ENCODE measurements at regions of chr11 and their contacts with region 1.

Region 1: GRCh38 chr11:65888163-65888814 is at the start of gene FIBP:
- DNase-seq: peak; percentile 98
- ATAC-seq: peak; percentile 68
- H3K4me3 Mint-ChIP-seq: peak within 1 kb of the TSS; percentile 94
- H3K27ac Mint-ChIP-seq: peak within 1 kb of the TSS; percentile 91
- H3K4me1 Mint-ChIP-seq: peaks cover 51% of the 10 kb centered on the region
- H3K27me3 Mint-ChIP-seq: no peaks in the 10 kb centered on the region
- CTCF ChIP-seq: peak; percentile 75
- total RNA-seq, gene FIBP: 78.8 to 79.9 TPM

Region 2: DNA sequence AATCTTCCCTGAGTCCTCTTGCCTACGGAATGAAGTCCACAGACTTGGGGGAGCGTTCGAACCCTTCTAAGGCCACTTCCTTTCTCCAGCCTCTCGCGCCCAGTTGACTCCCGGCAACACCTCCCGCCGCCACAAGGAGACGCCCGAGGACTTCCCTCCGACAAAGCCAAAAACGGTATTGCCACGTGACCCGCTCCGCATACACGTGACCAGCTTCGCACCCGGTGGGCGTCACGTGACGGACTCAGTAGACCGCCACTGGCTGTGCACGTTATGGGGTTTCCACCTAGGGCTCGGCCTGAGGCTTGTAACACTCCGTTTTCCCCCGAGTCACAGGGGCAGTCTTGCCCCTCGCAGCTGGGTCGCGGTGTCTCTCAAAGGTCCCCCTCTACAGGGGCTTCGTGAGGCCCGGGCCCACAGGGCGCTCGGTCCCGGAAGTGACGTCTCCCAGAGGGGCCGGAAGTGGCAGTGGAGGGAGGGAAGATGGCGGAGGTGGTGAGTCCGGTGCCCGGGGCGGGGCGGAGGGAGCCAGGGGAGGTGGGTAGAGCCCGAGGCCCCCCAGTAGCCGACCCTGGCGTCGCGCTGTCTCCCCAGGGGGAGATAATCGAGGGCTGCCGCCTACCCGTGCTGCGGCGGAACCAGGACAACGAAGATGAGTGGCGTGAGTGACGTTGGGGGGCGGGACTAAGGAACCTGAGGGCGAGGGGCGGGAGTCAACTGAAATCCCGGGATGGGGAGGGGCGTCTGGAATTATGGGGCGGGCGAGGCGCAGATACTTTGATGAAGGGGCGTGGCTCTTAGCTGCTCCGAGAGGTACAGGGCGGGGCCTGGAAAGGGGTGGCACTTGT is 176.3 kb before region 1 on chr11 and contains the start of gene KAT5:
- CTCF ChIA-PET with region 1: interaction called, 30 read pairs
- POLR2A ChIA-PET with region 1: interaction called, 4 read pairs
- intact Hi-C with region 1: no loop called
- DNase-seq: peak; percentile 99
- ATAC-seq: peak; percentile 82
- H3K4me3 Mint-ChIP-seq: peak within 1 kb of the TSS; percentile 93
- H3K27ac Mint-ChIP-seq: peak within 1 kb of the TSS; percentile 98
- H3K4me1 Mint-ChIP-seq: peaks cover 20% of the 10 kb centered on the region
- H3K27me3 Mint-ChIP-seq: no peaks in the 10 kb centered on the region
- CTCF ChIP-seq: peak; percentile 93
- total RNA-seq, gene KAT5: 67.7 to 71.8 TPM

Region 3: GRCh38 chr11:65850831-65851811 is 37.2 kb before region 1 on chr11:
- CTCF ChIA-PET with region 1: interaction called, 283 read pairs
- POLR2A ChIA-PET with region 1: interaction called, 560 read pairs
- intact Hi-C with region 1: no loop called
- DNase-seq: peak; percentile 44
- ATAC-seq: peak; percentile 57
- H3K4me3 Mint-ChIP-seq: no peak overlapping the region
- H3K27ac Mint-ChIP-seq: peak overlapping the region; percentile 33
- H3K4me1 Mint-ChIP-seq: peaks cover 24% of the 10 kb centered on the region
- H3K27me3 Mint-ChIP-seq: no peaks in the 10 kb centered on the region
- CTCF ChIP-seq: peak; percentile 72

Region 4: DNA sequence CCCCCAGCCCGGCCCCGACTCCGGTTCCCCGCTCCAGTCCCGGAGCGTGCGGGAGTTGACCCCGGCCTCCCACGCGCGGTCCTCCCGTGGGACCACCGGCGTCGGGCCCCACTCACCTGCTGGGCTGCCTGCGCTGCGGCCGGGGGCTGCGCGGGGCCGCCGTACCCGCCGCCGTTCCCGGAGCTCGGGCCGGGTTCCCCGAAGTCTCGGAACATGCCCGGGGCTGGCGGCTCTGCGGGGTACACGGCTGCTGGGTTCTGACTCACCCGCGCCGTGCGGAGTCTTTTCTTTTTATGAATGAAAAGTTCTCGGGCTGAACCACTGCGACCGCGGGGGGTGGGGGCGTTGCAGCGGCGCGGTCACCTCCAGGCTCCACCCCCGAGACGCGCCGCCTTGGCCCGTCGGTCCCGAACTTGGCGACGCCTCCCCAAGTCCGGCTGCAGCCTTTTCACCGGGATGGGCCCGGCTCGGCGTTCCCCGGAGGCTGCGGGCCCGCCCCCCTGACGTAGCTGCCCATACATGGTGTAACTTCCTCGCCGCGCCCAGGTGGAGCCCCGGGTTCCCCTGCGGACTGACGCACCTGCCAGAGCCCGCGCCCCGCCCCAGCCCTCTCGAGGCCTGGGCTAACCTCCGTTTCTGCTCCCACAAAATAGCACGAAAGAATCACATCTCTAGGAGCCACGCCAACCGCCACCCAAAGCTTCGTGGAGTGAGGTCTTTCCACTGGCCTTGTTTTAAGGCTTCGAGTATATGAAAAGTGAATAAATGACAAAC is 12.0 kb after region 1 on chr11 and contains the start of gene FOSL1:
- CTCF ChIA-PET with region 1: interaction called, 71 read pairs
- POLR2A ChIA-PET with region 1: interaction called, 82 read pairs
- intact Hi-C with region 1: no loop called
- DNase-seq: peak; percentile 97
- ATAC-seq: peak; percentile 88
- H3K4me3 Mint-ChIP-seq: peak within 1 kb of the TSS; percentile 80
- H3K27ac Mint-ChIP-seq: peak within 1 kb of the TSS; percentile 86
- H3K4me1 Mint-ChIP-seq: peaks cover 32% of the 10 kb centered on the region
- H3K27me3 Mint-ChIP-seq: peaks cover 5% of the 10 kb centered on the region
- CTCF ChIP-seq: no peak
- total RNA-seq, gene FOSL1: 9.9 to 10.2 TPM

Region 5: DNA sequence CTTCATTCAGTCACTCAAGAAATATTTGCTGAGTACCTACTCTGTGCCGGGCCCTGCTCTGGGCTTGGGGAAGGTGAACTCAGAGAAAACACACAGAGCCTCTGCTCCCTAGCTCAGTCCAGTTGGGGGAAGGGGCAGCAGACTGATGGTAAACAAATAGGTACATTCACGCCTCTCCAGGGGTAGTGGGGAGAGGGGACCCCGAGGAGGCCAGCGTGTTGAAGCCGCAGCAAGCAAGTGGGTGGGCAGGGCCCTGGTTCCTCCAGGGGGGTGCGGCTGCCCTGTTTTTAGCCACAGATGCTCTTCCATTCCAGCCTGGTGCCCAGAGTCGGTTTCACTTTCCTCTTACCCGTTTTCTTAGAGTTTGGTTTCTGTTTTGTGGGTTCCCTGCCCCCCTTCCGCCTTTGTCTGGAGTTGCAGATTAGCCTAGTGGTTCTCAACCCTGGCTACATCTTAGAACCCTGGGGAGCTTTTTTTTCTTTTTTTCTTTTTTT is 39.7 kb after region 1 on chr11:
- CTCF ChIA-PET with region 1: interaction called, 16 read pairs
- POLR2A ChIA-PET with region 1: interaction called, 7 read pairs
- intact Hi-C with region 1: loop called (anchors 5 kb)
- DNase-seq: peak; percentile 93
- ATAC-seq: peak; percentile 88
- H3K4me3 Mint-ChIP-seq: peak overlapping the region; percentile 71
- H3K27ac Mint-ChIP-seq: peak overlapping the region; percentile 93
- H3K4me1 Mint-ChIP-seq: peaks cover 43% of the 10 kb centered on the region
- H3K27me3 Mint-ChIP-seq: no peaks in the 10 kb centered on the region
- CTCF ChIP-seq: no peak

Region 6: DNA sequence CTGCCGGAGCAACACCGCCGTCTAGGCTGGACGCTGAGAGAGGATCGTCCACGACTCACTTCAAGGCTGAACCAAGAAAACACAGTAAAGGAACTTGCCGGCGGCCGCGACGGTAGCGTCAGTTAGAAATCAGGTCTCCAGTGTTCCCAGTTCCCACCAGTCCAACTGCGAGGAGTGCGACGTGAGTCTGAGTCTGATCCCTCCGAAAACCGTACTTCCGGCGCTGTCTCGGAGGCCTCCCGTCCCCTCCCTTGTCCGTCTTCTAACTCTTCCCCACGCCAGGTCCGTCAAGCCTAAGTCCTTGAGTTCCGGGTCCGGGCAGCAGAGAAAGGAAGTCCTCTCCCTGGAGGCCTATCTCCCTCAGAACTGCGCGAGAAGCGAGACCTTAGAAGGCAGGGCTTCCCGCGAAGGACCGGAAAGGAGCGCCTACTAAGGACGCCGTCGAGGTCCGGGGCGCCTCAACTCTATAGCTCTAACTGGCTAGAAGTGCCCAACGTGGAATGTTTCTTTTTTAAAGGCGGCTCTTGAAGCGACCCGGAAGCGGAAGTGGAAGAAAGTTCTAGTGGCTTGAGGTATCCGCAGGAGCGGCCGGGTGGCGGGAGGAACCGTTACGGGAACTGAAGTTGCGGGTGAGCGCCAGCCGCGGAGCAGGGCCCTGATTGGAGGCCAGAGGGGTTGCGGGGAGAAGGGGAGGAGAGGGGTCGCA is 113.8 kb after region 1 on chr11 and contains the starts of genes BANF1 and EIF1AD:
- CTCF ChIA-PET with region 1: interaction called, 20 read pairs
- POLR2A ChIA-PET with region 1: interaction called, 10 read pairs
- intact Hi-C with region 1: no loop called
- DNase-seq: peak; percentile 96
- ATAC-seq: peak; percentile 93
- H3K4me3 Mint-ChIP-seq: peak within 1 kb of the TSS; percentile 98
- H3K27ac Mint-ChIP-seq: peak within 1 kb of the TSS; percentile 98
- H3K4me1 Mint-ChIP-seq: peaks cover 34% of the 10 kb centered on the region
- H3K27me3 Mint-ChIP-seq: no peaks in the 10 kb centered on the region
- CTCF ChIP-seq: no peak
- total RNA-seq, gene BANF1: 267 to 311 TPM
- total RNA-seq, gene EIF1AD: 44.4 to 45.6 TPM